Activated B cell treated with CpG ODN at 0.5 μM for 24 hours (primary cell): ENCODE measurements at regions of chrX and their contacts with region 1.

Region 1: DNA sequence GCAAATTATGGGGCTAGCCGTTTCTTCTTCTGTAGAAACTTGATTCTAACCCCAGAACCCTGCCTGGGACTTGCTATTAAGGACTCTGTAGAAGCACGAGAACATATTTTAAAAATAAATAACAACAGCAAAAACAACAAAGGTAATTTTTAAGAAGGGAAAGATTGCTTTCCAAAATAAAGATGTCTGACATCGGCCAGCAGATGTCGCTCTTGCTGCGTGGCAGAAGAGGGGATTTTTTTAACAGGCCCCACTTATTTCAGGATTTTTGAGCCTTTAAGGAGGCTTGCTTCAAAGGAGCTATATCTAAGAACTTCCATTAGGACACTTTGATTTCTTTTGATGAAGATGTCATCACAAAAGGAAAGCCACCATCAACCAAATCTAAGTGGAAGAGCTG is 62.8 kb upstream of the EGFL6 start:
- DNase-seq: peak; percentile 15
- ATAC-seq: no peak
- H3K4me3 Mint-ChIP-seq: no peak overlapping the region
- H3K27ac Mint-ChIP-seq: no peak overlapping the region
- H3K4me1 Mint-ChIP-seq: no peaks in the 10 kb centered on the region
- H3K27me3 Mint-ChIP-seq: no peaks in the 10 kb centered on the region
- CTCF ChIP-seq: no peak

Region 2: DNA sequence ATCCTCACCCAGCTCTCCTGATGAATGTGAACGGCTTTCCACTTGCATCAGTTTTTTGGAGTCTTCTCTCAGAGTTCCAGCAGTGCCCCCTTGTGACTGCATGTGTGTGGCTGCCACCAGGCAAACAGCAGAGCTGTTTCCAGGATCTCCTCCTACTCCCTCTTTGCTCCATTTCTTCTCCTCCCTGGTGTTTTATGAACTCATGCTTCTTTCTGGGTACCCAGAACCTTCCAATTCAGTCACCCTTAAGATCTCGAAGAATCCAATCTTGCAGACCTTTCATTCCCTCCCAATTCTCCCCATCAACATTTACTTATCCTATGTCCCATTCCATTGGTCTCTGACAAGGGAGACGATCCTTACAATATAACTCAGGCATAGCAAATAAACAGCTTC is 139.6 kb after region 1 on chrX:
- CTCF ChIA-PET with region 1: interaction called, 7 read pairs
- POLR2A ChIA-PET with region 1: no interaction called
- intact Hi-C with region 1: loop called (anchors 1 kb)
- DNase-seq: no peak
- ATAC-seq: no peak
- H3K4me3 Mint-ChIP-seq: no peak overlapping the region
- H3K27ac Mint-ChIP-seq: no peak overlapping the region
- H3K4me1 Mint-ChIP-seq: peaks cover 3% of the 10 kb centered on the region
- H3K27me3 Mint-ChIP-seq: no peaks in the 10 kb centered on the region
- CTCF ChIP-seq: no peak

Region 3: GRCh38 chrX:13653022-13653693 is 146.6 kb after region 1 on chrX and contains the start of gene TCEANC:
- CTCF ChIA-PET with region 1: no interaction called
- POLR2A ChIA-PET with region 1: no interaction called
- intact Hi-C with region 1: loop called (anchors 2 kb)
- DNase-seq: peak; percentile 79
- ATAC-seq: peak; percentile 93
- H3K4me3 Mint-ChIP-seq: peak within 1 kb of the TSS; percentile 91
- H3K27ac Mint-ChIP-seq: peak within 1 kb of the TSS; percentile 91
- H3K4me1 Mint-ChIP-seq: peaks cover 13% of the 10 kb centered on the region
- H3K27me3 Mint-ChIP-seq: no peaks in the 10 kb centered on the region
- CTCF ChIP-seq: no peak
- total RNA-seq, gene TCEANC: 5.1 and 5.9 TPM in 2 replicates

Region 4: GRCh38 chrX:13750204-13750603 is 243.6 kb after region 1 on chrX:
- CTCF ChIA-PET with region 1: interaction called, 5 read pairs
- POLR2A ChIA-PET with region 1: no interaction called
- intact Hi-C with region 1: loop called (anchors 5 kb)
- DNase-seq: no peak
- ATAC-seq: peak; percentile 49
- H3K4me3 Mint-ChIP-seq: no peak overlapping the region
- H3K27ac Mint-ChIP-seq: peak overlapping the region; percentile 41
- H3K4me1 Mint-ChIP-seq: peaks cover 42% of the 10 kb centered on the region
- H3K27me3 Mint-ChIP-seq: no peaks in the 10 kb centered on the region
- CTCF ChIP-seq: no peak

Region 5: DNA sequence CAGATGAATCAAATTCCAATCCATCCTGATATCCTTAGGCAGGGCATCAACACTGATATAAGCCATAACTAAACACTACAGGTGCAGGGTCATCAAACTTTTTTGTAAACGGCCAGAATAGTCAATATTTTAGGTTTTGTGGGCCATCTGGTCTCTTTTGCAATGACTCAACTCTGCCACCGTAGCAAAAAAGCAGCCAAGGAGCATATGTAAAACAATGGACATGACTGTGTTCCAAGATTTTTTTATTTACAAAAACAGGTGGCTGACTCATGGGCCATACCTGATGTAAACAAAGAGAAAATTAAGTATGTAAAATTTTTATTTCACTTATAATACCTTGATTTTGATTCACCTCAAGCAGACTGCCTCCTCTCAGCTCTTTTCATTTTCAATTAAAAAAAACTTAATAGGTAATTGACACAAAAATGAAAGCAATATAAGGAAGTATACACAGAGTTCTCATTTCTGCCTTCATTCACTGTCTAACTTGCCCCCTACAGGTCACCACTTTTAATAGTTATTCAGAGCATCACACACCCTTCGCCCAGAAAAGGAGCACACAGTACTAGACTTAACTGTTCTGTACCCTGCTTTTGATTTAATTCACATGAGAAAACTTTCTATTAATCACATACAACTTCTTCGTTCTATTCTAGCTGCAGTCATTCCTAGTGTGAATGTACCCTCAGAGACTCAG is 345.6 kb after region 1 on chrX:
- CTCF ChIA-PET with region 1: no interaction called
- POLR2A ChIA-PET with region 1: no interaction called
- intact Hi-C with region 1: loop called (anchors 2 kb)
- DNase-seq: no peak
- ATAC-seq: peak; percentile 61
- H3K4me3 Mint-ChIP-seq: no peak overlapping the region
- H3K27ac Mint-ChIP-seq: no peak overlapping the region
- H3K4me1 Mint-ChIP-seq: peaks cover 3% of the 10 kb centered on the region
- H3K27me3 Mint-ChIP-seq: no peaks in the 10 kb centered on the region
- CTCF ChIP-seq: no peak

Region 6: DNA sequence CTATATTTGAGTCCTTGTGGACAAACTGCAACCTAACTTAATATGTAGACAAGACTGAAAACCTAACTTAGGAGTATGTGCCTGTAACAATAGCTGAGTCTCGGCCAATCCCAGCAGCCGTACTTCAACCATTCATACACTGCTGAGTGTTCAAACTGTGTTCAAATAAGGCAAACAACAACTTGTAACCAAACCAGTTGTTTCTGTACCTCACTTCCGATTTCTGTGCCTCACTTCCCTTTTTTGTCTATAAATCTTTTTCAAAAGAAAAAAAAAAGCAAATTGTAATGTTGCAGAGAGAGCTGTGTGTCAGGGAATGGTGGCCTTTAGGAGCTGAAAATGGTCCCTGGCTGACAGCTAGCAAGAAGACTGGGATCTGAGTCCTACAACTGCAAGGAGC is 477.2 kb after region 1 on chrX:
- CTCF ChIA-PET with region 1: no interaction called
- POLR2A ChIA-PET with region 1: no interaction called
- intact Hi-C with region 1: loop called (anchors 1 kb)
- DNase-seq: no peak
- ATAC-seq: peak; percentile 21
- H3K4me3 Mint-ChIP-seq: peak overlapping the region; percentile 32
- H3K27ac Mint-ChIP-seq: no peak overlapping the region
- H3K4me1 Mint-ChIP-seq: peaks cover 8% of the 10 kb centered on the region
- H3K27me3 Mint-ChIP-seq: no peaks in the 10 kb centered on the region
- CTCF ChIP-seq: no peak

Region 7: GRCh38 chrX:15143050-15143824 is 1636.7 kb after region 1 on chrX:
- CTCF ChIA-PET with region 1: interaction called, 3 read pairs
- POLR2A ChIA-PET with region 1: no interaction called
- intact Hi-C with region 1: loop called (anchors 5 kb)
- DNase-seq: no peak
- ATAC-seq: peak; percentile 60
- H3K4me3 Mint-ChIP-seq: no peak overlapping the region
- H3K27ac Mint-ChIP-seq: no peak overlapping the region
- H3K4me1 Mint-ChIP-seq: peaks cover 2% of the 10 kb centered on the region
- H3K27me3 Mint-ChIP-seq: no peaks in the 10 kb centered on the region
- CTCF ChIP-seq: no peak